ENCODE measurements at regions of chr17 and their contacts with region 1.

Region 1: GRCh38 chr17:27654654-27655524 is 23.9 kb downstream of the LGALS9 start:
- DNase-seq: peak; percentile 86

Region 2: GRCh38 chr17:27236717-27237315 is 418.1 kb before region 1 on chr17:
- intact Hi-C with region 1: loop called (anchors 10 kb)
- DNase-seq: no peak

Region 3: DNA sequence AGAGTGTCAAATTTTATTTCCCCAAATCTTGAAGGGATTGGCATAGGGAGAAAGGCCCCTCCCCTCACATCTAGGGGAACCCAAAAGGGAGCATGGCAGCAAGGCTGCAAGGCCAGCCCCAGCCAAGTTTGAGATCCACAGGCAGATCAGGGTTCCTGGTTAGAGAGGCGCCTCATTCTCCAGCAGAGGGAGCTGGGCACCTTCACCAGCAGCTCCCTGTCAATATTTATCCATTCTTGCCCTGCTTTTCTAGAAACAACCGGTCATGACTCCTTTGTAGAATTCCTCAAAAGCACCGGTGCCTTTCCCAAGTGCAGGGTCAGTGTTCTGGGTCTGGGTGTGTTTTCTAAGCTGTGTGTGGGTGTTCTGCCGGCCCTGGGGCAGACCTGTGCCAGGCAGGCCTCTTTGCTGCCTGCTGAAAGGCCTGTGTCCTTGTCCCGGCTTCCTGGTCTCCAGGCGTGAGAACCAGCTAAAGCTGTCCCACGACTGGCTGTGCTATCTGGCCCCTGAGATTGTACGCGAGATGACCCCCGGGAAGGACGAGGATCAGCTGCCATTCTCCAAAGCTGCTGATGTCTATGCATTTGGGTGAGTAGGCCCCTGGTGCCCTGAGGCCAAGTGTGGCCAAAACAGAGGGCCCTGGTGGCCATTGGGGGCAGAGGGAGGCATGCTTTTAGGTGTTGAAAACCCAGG is 45.1 kb before region 1 on chr17:
- intact Hi-C with region 1: loop called (anchors 2 kb)
- DNase-seq: no peak

Region 4: GRCh38 chr17:27760069-27760885 is 105.4 kb after region 1 on chr17:
- intact Hi-C with region 1: loop called (anchors 1 kb)
- DNase-seq: peak; percentile 84

Region 5: GRCh38 chr17:27879987-27880608 is 225.2 kb after region 1 on chr17:
- intact Hi-C with region 1: loop called (anchors 10 kb)
- DNase-seq: peak; percentile 80